HepG2 (cell line): ENCODE measurements at regions of chr6 and their contacts with region 1.

Region 1: DNA sequence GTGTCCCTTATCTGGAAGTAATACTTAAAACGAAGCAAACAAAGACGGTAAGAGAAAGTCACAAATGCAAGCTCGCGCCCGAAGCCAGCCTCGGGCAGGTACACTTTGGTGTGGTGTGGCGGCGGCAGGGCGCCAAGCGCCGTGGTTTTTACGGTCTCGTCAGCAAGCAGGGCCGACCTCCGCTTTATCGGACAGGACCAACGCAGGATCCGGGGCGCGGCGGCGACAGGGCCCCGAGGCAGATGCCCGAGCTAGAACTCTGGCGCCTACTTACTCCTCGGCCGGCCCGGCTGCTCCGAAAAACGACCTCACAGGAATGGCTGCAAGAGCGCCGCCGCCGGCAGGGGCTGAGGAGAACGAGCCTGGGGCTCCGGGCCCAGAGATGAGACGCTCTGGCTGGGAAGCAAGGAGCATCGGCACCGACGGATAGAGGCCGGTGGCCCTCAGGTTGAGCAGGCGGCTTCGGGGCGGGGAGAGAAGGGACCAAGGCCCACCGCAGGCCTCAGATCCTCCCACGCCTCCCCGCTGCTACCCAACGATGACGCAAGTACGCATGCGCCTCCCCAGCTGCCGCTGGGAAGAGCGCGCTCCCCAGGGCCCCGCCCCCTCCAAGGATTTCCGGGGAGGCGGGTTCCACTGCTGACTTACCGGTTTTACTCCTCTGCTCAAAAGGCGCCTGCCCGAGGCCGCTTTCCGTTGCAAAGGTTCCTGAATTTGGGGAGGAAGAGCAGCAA is 60.6 kb downstream of the FAM217A start:
- DNase-seq: peak; percentile 96
- ATAC-seq: peak; percentile 80
- H3K4me3 ChIP-seq: peak overlapping the region; percentile 81 to 91 (median 82)
- H3K27ac ChIP-seq: peak overlapping the region; percentile 97
- H3K4me1 ChIP-seq: peaks cover 32% of the 10 kb centered on the region
- H3K27me3 ChIP-seq: no peaks in the 10 kb centered on the region; a peak in 1 of 5 replicates
- CTCF ChIP-seq: peak; percentile 74
- EP300 ChIP-seq: no peak
- POLR2A ChIP-seq: peak; percentile 93 to 95
- RAD21 ChIP-seq: peak; percentile 31; the same call in 1 of the 2 replicates

Region 2: GRCh38 chr6:3970097-3970496 is 48.2 kb before region 1 on chr6:
- CTCF ChIA-PET with region 1: no interaction called
- POLR2A ChIA-PET with region 1: no interaction called
- in situ Hi-C with region 1: no loop called
- intact Hi-C with region 1: no loop called
- DNase-seq: no peak
- ATAC-seq: no peak
- H3K4me3 ChIP-seq: no peak overlapping the region
- H3K27ac ChIP-seq: no peak overlapping the region
- H3K4me1 ChIP-seq: peaks cover 9% of the 10 kb centered on the region
- H3K27me3 ChIP-seq: peaks cover 1 to 2% of the 10 kb centered on the region in 2 experiments; a peak in 1 of 5 replicates
- CTCF ChIP-seq: no peak
- EP300 ChIP-seq: no peak
- POLR2A ChIP-seq: no peak
- RAD21 ChIP-seq: no peak

Region 3: DNA sequence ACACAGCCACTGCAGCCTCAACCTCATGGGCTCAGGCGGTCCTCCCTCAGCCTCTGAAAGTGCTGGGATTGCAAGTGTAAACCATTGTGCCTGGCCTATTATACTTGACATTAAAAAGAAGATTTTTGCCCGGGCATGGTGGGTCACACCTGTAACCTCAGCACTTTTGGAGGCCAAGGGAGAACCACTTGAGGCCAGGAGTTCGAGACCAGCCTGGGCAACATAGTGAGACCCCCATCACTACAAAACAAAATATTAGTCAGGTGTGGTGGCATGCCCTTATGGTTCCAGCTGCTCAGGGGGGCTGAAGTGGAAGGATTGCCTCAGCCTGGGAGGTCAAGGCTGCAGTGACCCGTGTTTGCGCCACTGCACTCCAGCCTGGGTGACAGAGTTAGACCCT is 18.2 kb after region 1 on chr6:
- CTCF ChIA-PET with region 1: no interaction called
- POLR2A ChIA-PET with region 1: interaction called, 17 read pairs
- in situ Hi-C with region 1: no loop called
- intact Hi-C with region 1: no loop called
- DNase-seq: no peak
- ATAC-seq: peak; percentile 31; the same call in 2 of the 3 replicates
- H3K4me3 ChIP-seq: no peak overlapping the region
- H3K27ac ChIP-seq: no peak overlapping the region
- H3K4me1 ChIP-seq: peaks cover 16% of the 10 kb centered on the region
- H3K27me3 ChIP-seq: no peaks in the 10 kb centered on the region
- CTCF ChIP-seq: no peak
- EP300 ChIP-seq: no peak
- POLR2A ChIP-seq: no peak
- RAD21 ChIP-seq: no peak

Region 4: DNA sequence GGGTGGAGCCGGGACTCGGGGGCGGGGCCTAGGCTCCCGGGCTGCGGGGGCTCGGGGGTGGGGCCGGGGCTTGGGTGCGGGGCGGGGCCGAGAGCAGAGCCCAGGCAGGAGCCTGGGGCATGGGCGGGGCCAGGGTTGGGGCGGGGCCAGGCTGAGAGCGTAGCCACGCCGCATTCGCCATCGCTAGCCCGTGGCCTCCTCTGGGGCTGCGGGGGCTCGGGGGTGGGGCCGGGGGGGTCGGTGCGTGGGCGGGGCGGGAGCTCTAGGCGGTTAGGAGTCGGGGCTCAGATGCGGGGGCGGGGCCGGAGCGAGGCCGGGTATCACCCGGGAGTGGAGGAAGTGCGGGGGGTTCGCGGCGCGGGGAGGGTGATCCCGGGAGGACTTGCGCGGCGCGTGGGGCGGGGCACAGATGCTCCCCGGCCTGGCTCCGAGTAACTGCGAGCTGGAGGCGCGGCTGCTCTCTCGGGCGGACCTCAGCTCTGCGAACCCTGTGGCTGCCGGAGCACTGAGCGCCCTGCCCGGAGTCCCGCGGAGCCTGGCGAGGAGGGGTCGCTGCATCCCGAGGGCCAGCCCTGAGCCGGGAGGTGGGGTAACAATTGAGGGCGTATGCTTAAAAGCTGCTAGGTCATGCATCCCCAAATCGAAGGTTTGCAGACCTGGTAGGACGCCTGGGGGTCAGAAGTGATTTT is 117.5 kb after region 1 on chr6:
- CTCF ChIA-PET with region 1: no interaction called
- POLR2A ChIA-PET with region 1: interaction called, 37 read pairs
- in situ Hi-C with region 1: no loop called
- intact Hi-C with region 1: loop called (anchors 2 kb)
- DNase-seq: peak; percentile 85
- ATAC-seq: peak; percentile 86
- H3K4me3 ChIP-seq: peak overlapping the region; percentile 66 to 86 (median 81)
- H3K27ac ChIP-seq: peak overlapping the region; percentile 20
- H3K4me1 ChIP-seq: peaks cover 44% of the 10 kb centered on the region
- H3K27me3 ChIP-seq: no peaks in the 10 kb centered on the region; a peak in 1 of 5 replicates
- CTCF ChIP-seq: peak; percentile 43
- EP300 ChIP-seq: no peak
- POLR2A ChIP-seq: peak; percentile 29 to 75; a peak in 2 of 4 replicates
- RAD21 ChIP-seq: no peak

Region 5: DNA sequence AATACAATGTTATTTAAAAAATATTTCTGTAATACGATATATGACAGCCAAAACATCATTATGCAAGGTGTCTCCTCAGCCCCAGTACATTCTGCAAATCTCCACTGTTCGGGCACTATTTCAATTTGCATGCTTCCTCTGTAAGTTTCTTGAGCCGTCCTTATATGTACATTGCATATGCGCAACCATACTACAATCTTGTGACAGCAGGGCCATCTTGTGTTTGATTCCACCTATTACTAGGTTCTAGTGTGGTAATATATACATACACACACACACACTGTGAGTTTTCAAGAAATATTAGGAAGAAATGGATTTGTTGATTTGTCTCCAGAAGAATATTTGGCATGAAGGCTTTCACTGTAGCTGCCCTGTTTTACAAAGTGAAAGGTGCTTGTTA is 1232.6 kb after region 1 on chr6:
- CTCF ChIA-PET with region 1: no interaction called
- POLR2A ChIA-PET with region 1: no interaction called
- in situ Hi-C with region 1: no loop called
- intact Hi-C with region 1: no loop called
- DNase-seq: no peak
- ATAC-seq: no peak
- H3K4me3 ChIP-seq: no peak overlapping the region
- H3K27ac ChIP-seq: no peak overlapping the region
- H3K4me1 ChIP-seq: peaks cover 22% of the 10 kb centered on the region
- H3K27me3 ChIP-seq: no peaks in the 10 kb centered on the region
- CTCF ChIP-seq: 0 out of 2 replicates have a peak, but pooled peaks have one; percentile 23
- EP300 ChIP-seq: no peak
- POLR2A ChIP-seq: no peak
- RAD21 ChIP-seq: no peak